ENCODE measurements at regions of chr10 and their contacts with region 1.

Region 1: DNA sequence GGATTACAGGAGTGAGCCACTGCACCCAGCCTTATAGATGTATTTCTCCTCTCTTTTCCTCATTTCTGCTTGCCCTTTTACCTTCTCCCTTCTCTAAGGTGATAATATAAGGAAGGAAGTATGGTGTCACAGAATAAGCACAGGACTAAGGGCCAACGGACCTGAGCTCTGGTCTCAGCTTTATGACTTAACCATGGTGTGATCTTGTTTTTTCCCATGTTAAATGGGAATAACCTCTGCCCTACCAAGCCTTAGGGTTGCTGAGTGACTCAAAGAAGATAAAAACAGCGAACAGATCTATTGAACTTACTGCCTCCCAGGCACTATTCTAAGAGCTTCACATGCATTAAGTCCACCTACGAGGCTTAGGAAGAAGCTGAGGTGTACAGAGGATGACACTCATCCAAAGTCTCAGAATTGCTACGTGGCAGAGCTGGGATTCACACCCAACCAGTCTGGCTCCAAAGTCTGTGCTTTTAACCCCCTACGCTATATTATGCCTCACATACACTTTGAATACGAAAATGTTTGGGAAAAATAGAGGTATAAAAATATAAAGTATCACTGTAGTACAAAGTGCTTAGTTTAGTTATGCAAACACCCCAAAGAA is 5.6 kb downstream of the UROS start:
- DNase-seq: no peak
- H3K4me3 ChIP-seq: no peak overlapping the region
- H3K27ac ChIP-seq: no peak overlapping the region
- H3K4me1 ChIP-seq: peaks cover 10 to 20% (median 16%) of the 10 kb centered on the region in 4 donors
- H3K27me3 ChIP-seq: no peaks in the 10 kb centered on the region
- CTCF ChIP-seq: no peak
- EP300 ChIP-seq: no peak
- POLR2A ChIP-seq: no peak

Region 2: GRCh38 chr10:125726914-125727313 is 90.5 kb before region 1 on chr10:
- intact Hi-C with region 1: loop called (anchors 5 kb)
- DNase-seq: no peak
- H3K4me3 ChIP-seq: no peak overlapping the region
- H3K27ac ChIP-seq: no peak overlapping the region
- H3K4me1 ChIP-seq: peaks cover 0 to under 1% (median 0%) of the 10 kb centered on the region in 4 donors
- H3K27me3 ChIP-seq: no peaks in the 10 kb centered on the region
- CTCF ChIP-seq: no peak
- EP300 ChIP-seq: no peak
- POLR2A ChIP-seq: no peak

Measured in esophagus muscularis mucosa (tissue), 4 donors.